Vagina (tissue), 2 donors: ENCODE measurements at regions of chr2 and their contacts with region 1.

Region 1: GRCh38 chr2:173831312-173832229 is 133.6 kb downstream of the SP3 start:
- DNase-seq: peak in 1 of 2 donors; percentile 96
- H3K4me3 ChIP-seq: no peak overlapping the region
- H3K27ac ChIP-seq: peak overlapping the region; percentile 90
- H3K4me1 ChIP-seq: peaks cover 51% of the 10 kb centered on the region
- H3K27me3 ChIP-seq: no peaks in the 10 kb centered on the region
- CTCF ChIP-seq: no peak
- POLR2A ChIP-seq: no peak

Region 2: DNA sequence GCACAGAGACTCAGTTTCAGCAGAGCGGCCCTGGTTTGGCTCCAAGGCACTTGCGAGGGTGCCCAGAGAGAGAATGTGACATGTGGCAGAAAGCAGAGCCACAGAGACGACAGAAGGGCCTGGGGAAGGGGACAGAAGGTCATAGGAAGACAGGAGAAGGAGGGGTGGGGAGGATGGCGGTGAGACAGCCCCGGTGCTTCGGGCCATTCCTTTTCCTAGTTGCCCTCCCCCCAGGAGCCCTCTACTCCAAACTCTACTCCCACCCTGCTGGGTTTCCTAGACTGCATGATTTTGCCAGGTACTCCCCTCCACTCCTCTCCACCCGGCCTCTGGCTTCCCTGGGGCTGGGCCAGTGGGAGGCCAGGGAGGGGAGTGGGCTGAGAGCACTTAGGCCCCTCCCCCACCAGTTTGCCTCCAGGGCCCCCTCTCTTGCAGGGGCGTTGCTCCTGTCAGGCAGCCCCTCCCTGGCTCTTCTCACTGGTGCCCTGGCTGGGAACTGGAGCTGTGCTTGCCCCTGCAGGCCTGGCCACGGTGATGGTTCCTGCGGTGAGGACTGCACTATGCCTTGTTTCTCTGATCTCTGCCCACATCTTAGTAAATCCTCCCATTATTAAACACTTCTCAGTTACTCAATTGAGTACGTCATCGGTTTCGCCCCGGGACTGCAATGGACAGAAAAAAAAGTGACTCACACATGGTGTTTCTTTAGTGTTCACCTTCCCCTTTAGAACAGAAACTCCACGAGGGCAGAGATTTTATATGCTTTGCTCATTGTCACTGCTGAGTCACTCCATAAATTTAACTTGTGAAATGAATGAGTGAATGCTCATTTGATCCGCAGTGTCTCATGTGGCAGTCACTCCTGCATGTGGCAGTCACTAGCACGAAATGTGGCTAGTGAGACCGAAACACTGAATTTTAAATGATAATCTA is 192.3 kb after region 1 on chr2:
- intact Hi-C with region 1: loop called (anchors 10 kb)
- DNase-seq: peak in 1 of 2 donors; percentile 96
- H3K4me3 ChIP-seq: peak overlapping the region in 1 of 2 donors; percentile 30
- H3K27ac ChIP-seq: peak overlapping the region; percentile 84
- H3K4me1 ChIP-seq: peaks cover 43% of the 10 kb centered on the region
- H3K27me3 ChIP-seq: no peaks in the 10 kb centered on the region
- CTCF ChIP-seq: no peak
- POLR2A ChIP-seq: peak in 1 of 2 donors; percentile 42